Heart right ventricle (tissue), 16 donors: ENCODE measurements at regions of chr4 and their contacts with region 1.

Region 1: DNA sequence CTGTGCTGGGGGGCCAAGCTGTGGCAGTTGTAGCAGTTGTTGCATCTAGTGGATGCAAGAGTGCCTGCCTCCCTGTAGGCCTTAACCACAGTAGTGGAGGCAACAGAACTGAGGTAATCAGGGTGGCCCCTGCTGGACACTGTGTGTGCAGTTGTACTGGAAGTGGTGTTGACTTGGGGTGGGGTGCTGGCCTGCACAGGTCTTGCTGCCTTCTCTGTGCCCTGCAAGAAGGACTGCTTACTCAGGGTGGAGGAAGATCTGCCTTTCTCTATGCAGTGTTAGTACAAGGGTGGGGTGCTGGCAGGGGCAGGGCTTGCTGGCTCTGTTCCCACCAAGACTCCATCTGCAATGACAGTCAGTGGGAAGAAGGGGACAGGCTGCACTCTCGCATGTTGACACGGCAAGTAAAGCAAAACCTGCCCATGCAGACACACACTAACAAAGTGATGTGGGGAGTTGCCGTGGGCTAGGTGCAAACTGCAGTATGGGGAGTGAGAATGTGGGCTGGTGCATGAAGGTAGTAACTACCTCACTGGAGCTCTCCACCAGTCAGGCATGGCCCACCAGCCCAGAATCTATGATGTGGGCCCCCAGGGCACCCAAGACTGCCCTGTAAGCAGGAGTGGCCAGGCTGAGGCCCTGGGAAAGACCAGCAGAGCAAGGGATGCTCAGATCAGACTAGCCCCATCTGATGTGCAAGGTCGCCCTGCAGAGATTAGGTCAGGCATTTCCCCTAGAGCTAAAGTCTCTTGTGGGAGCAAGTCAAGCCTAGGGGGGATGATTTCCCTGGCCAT is 594.9 kb downstream of the TECRL start:
- DNase-seq: no peak
- ATAC-seq: no peak
- H3K4me3 ChIP-seq: no peak overlapping the region
- H3K27ac ChIP-seq: no peak overlapping the region
- H3K4me1 ChIP-seq: no peaks in the 10 kb centered on the region
- H3K27me3 ChIP-seq: no peaks in the 10 kb centered on the region
- CTCF ChIP-seq: no peak

Region 2: GRCh38 chr4:63851496-63851895 is 37.1 kb after region 1 on chr4:
- intact Hi-C with region 1: loop called in 1 of 10 experiments (anchors 10 kb)
- DNase-seq: no peak
- ATAC-seq: no peak
- H3K4me3 ChIP-seq: no peak overlapping the region
- H3K27ac ChIP-seq: no peak overlapping the region
- H3K4me1 ChIP-seq: no peaks in the 10 kb centered on the region
- H3K27me3 ChIP-seq: no peaks in the 10 kb centered on the region
- CTCF ChIP-seq: no peak

Region 3: GRCh38 chr4:63869370-63869769 is 55.0 kb after region 1 on chr4:
- intact Hi-C with region 1: no loop called
- DNase-seq: no peak
- ATAC-seq: no peak
- H3K4me3 ChIP-seq: no peak overlapping the region
- H3K27ac ChIP-seq: no peak overlapping the region
- H3K4me1 ChIP-seq: no peaks in the 10 kb centered on the region
- H3K27me3 ChIP-seq: no peaks in the 10 kb centered on the region
- CTCF ChIP-seq: no peak